Heart left ventricle (tissue), 16 donors: ENCODE measurements at regions of chr15 and their contacts with region 1.

Region 1: GRCh38 chr15:58980351-58980939 is 7.0 kb upstream of the RNF111 start:
- DNase-seq: no peak
- ATAC-seq: no peak
- H3K4me3 ChIP-seq: no peak overlapping the region
- H3K27ac ChIP-seq: peak overlapping the region in 1 of 12 donors; percentile 35
- H3K4me1 ChIP-seq: peaks cover 0 to 52% (median 0%) of the 10 kb centered on the region in 12 donors
- H3K27me3 ChIP-seq: no peaks in the 10 kb centered on the region
- CTCF ChIP-seq: peak; percentile 32 to 68 (median 55)
- POLR2A ChIP-seq: no peak

Region 2: GRCh38 chr15:58924327-58924726 is 56.1 kb before region 1 on chr15:
- intact Hi-C with region 1: no loop called
- DNase-seq: no peak
- ATAC-seq: no peak
- H3K4me3 ChIP-seq: no peak overlapping the region
- H3K27ac ChIP-seq: peak overlapping the region in 2 of 12 donors; percentile 19 to 55
- H3K4me1 ChIP-seq: peaks cover 0 to 25% (median 8%) of the 10 kb centered on the region in 12 donors
- H3K27me3 ChIP-seq: no peaks in the 10 kb centered on the region
- CTCF ChIP-seq: no peak
- POLR2A ChIP-seq: no peak

Region 3: GRCh38 chr15:59148153-59148833 is 167.8 kb after region 1 on chr15:
- intact Hi-C with region 1: loop called in 1 of 10 experiments (anchors 10 kb)
- DNase-seq: no peak
- ATAC-seq: no peak
- H3K4me3 ChIP-seq: no peak overlapping the region
- H3K27ac ChIP-seq: no peak overlapping the region
- H3K4me1 ChIP-seq: peaks cover 0 to 4% (median 0%) of the 10 kb centered on the region in 12 donors
- H3K27me3 ChIP-seq: no peaks in the 10 kb centered on the region
- CTCF ChIP-seq: no peak
- POLR2A ChIP-seq: no peak

Region 4: GRCh38 chr15:59299929-59300617 is 319.6 kb after region 1 on chr15:
- intact Hi-C with region 1: no loop called
- DNase-seq: peak in 4 of 5 donors; percentile 65 to 77 (median 69)
- ATAC-seq: peak; percentile 53 to 97 (median 94)
- H3K4me3 ChIP-seq: peak overlapping the region in 4 of 12 donors; percentile 0 to 23 (median 10)
- H3K27ac ChIP-seq: peak overlapping the region in 9 of 12 donors; percentile 4 to 82 (median 24)
- H3K4me1 ChIP-seq: peaks cover 0 to 57% (median 21%) of the 10 kb centered on the region in 12 donors
- H3K27me3 ChIP-seq: no peaks in the 10 kb centered on the region
- CTCF ChIP-seq: no peak
- POLR2A ChIP-seq: no peak

Region 5: DNA sequence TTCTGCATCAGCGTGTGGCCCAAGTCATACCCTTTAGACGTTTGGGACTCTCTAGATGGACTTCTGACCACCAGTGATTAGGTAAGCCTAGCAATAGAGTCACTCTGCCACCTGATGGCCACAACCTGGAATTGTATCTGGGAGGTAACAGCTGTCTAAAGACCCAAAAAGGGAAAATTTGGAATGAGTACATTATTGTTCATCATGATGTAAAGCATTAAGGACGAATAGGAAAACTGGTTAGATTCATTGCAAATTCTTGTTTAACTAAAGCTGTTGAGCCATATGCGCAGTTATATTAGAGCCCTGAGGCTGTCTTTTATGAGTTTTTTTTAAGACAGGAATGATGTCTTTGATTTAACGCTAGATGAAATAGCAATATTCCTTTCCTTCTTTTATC is 521.2 kb after region 1 on chr15:
- intact Hi-C with region 1: loop called in 1 of 10 experiments (anchors 5 kb)
- DNase-seq: no peak
- ATAC-seq: no peak
- H3K4me3 ChIP-seq: no peak overlapping the region
- H3K27ac ChIP-seq: no peak overlapping the region
- H3K4me1 ChIP-seq: no peaks in the 10 kb centered on the region
- H3K27me3 ChIP-seq: no peaks in the 10 kb centered on the region
- CTCF ChIP-seq: peak; percentile 35 to 64 (median 50)
- POLR2A ChIP-seq: no peak